ENCODE measurements at regions of chr1 and their contacts with region 1.

Region 1: GRCh38 chr1:147494998-147495580 is 46.2 kb upstream of the BCL9 start:
- DNase-seq: peak; percentile 69
- H3K4me3 ChIP-seq: no peak overlapping the region
- H3K27ac ChIP-seq: no peak overlapping the region
- H3K4me1 ChIP-seq: no peaks in the 10 kb centered on the region
- H3K27me3 ChIP-seq: peaks cover 10% of the 10 kb centered on the region
- CTCF ChIP-seq: peak; percentile 74 to 93 (median 85)
- EP300 ChIP-seq: no peak
- POLR2A ChIP-seq: no peak

Region 2: DNA sequence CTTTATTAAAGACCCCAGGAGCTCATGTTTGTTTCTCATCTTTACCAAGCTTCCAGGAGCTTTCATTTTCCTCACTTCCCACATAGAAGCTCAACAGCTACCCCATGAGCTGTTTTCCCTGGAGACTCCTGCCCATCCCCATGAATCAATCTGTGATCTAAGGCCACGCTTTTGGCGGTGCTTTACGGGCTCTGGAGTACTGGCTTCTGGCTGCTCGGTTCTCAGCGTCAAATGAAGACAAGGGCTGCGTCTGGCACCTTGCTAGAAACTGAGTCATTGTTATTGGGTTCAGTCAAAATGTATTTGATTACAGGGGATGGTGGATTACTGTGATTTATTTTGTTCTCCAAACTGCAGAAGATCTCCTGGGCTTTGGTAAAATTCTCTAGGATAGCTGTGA is 135.4 kb after region 1 on chr1:
- in situ Hi-C with region 1: loop called in 3 of 4 experiments (anchors 10 kb)
- intact Hi-C with region 1: no loop called
- DNase-seq: no peak
- H3K4me3 ChIP-seq: no peak overlapping the region
- H3K27ac ChIP-seq: no peak overlapping the region
- H3K4me1 ChIP-seq: peaks cover 0 to 4% (median 3%) of the 10 kb centered on the region in 4 donors
- H3K27me3 ChIP-seq: no peaks in the 10 kb centered on the region
- CTCF ChIP-seq: no peak
- EP300 ChIP-seq: no peak
- POLR2A ChIP-seq: no peak

Region 3: GRCh38 chr1:147640553-147641165 is 145.6 kb after region 1 on chr1:
- in situ Hi-C with region 1: loop called in 3 of 4 experiments (anchors 10 kb)
- intact Hi-C with region 1: loop called (anchors 5 kb)
- DNase-seq: peak; percentile 78
- H3K4me3 ChIP-seq: no peak overlapping the region
- H3K27ac ChIP-seq: no peak overlapping the region
- H3K4me1 ChIP-seq: peaks cover 3 to 10% (median 5%) of the 10 kb centered on the region in 4 donors
- H3K27me3 ChIP-seq: no peaks in the 10 kb centered on the region
- CTCF ChIP-seq: peak; percentile 67 to 87 (median 81)
- EP300 ChIP-seq: no peak
- POLR2A ChIP-seq: no peak

Region 4: GRCh38 chr1:147882535-147882934 is 387.4 kb after region 1 on chr1:
- in situ Hi-C with region 1: loop called in 2 of 4 experiments (anchors 10 to 25 kb)
- intact Hi-C with region 1: no loop called
- DNase-seq: no peak
- H3K4me3 ChIP-seq: no peak overlapping the region
- H3K27ac ChIP-seq: no peak overlapping the region
- H3K4me1 ChIP-seq: no peaks in the 10 kb centered on the region
- H3K27me3 ChIP-seq: no peaks in the 10 kb centered on the region
- CTCF ChIP-seq: no peak
- EP300 ChIP-seq: no peak
- POLR2A ChIP-seq: no peak

Region 5: DNA sequence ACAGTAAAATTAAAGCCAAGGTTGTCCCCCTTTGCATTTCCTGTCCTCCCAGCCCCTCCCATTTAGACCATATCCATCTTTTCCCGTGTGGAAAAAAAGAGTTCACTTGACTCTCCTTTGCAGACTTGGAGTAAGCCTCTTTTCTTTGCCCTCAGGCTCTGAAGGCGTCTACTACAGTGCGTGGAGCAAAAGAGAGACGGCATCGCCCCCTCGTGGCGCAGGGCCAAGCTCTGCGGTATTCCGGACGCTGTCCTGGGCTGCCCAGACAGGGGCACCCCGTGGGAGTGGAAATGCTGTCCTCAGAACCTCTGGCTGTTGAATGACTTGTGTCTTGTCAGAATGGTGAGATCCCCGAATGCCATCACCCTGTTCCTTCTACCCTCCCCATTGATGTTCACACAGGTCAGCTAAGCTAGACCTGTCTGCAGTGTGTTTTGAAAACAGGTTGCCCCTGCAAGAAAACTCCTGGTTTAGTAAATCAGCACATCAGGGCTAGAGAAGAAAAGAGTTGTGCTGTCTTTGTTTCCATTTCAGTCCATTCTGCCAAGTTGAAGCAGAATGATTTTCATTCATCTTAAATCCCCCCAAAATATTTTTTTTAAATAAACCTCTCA is 395.2 kb after region 1 on chr1:
- in situ Hi-C with region 1: loop called in 3 of 4 experiments (anchors 10 to 25 kb)
- intact Hi-C with region 1: no loop called
- DNase-seq: peak; percentile 62
- H3K4me3 ChIP-seq: no peak overlapping the region
- H3K27ac ChIP-seq: no peak overlapping the region
- H3K4me1 ChIP-seq: no peaks in the 10 kb centered on the region
- H3K27me3 ChIP-seq: peaks cover 4% of the 10 kb centered on the region
- CTCF ChIP-seq: peak; percentile 28 to 47 (median 45)
- EP300 ChIP-seq: no peak
- POLR2A ChIP-seq: no peak

Measured in transverse colon (tissue), 4 donors.